Brain microvascular endothelial cell (primary cell): ENCODE measurements at regions of chr11 and their contacts with region 1.

Region 1: GRCh38 chr11:33670250-33671011 is 30.2 kb downstream of the C11orf91 start:
- DNase-seq: peak; percentile 72
- H3K4me3 ChIP-seq: no peak overlapping the region
- H3K27ac ChIP-seq: peak overlapping the region; percentile 77
- H3K27me3 ChIP-seq: no peaks in the 10 kb centered on the region
- CTCF ChIP-seq: peak; percentile 14

Region 2: DNA sequence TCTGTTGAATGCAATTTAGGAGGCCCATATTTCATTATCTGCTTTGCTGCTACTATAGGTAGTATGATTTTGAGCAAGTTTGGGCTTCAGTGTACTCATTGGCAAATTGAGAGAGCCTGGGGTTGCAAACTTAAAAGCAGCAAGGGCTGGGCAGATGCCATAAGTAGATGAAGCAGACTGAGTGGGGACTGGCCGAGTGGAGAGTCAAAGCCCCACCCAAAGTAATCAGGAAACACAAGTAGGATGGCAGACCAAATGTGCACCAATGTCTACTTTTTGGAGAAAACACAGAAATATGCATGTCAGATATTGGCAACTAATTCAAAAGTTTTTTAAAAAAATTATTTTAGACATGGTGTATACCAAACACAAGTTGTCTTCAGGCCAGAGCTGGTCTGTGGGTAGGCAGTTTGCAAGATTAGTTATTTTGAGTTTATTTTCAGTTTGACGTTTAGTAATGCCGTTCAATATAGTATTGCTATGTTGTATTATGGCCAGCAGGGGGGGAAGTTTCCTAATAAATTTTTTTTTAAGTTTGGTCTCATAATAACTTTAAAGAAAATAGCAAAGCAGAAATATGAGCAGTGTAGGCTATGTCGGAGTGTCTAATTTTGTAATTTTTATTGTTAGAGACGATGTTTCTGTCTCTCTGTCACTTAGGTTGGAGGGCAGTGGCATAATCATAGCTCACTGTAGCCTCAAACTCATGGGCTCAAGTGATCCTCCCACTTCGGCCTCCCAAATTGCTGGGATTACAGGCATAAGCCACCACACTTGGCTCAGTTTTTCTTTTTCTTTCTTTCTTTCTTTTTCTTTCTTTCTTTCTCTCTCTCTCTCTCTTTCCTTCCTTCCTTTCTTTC is 308.1 kb before region 1 on chr11:
- in situ Hi-C with region 1: loop called (anchors 25 kb)
- DNase-seq: peak; percentile 35
- H3K4me3 ChIP-seq: no peak overlapping the region
- H3K27ac ChIP-seq: no peak overlapping the region
- H3K27me3 ChIP-seq: no peaks in the 10 kb centered on the region
- CTCF ChIP-seq: peak; percentile 18